CD8-positive, alpha-beta T cell (primary cell): ENCODE measurements at regions of chr11 and their contacts with region 1.

Region 1: DNA sequence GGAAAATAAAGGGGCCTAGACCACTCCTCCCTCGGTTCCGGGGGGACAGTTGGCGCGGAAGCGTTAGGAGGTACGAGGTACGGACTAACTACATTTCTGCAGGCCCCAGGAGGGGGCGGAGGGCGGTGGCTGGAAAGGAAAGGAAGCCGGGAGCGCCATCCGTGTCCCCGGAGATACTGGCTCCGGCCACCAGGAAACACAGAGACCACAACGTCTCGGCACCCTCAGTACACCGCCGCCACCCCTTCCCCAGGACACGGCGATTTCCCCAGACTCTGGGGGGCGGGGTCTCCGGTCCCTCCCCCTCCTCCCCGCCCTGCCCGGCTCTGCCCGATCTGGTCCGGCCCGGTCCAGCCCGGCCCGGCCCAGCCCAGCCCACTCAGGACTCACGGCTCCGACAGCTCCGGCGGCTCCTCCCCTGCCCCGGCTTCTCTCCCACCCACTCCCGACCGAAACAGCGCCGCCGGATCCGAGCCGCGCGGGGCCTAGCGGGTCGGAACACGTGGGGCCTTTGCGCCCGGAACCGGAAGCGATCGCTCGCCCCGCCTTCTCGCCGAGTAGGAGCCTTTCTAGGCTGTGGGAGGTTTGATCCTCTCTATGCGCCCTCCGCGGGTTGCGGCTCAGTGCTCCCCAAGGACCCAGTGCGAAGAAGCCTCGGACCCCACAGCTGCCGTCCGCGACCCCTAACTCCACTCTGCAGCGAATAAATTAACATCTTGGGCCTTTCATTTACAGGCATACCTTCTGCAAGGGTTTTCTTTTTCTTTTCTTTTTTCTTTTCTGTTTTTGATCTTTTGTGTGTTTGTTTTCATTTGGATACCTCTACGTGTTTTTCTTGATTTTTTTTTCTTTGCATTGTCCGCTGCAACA is at the start of gene ZNF202:
- DNase-seq: peak; percentile 78 to 94 (median 93)
- ATAC-seq: peak; percentile 93
- H3K4me3 ChIP-seq: peak within 1 kb of the TSS; percentile 51 to 91
- H3K4me3 Mint-ChIP-seq: peak within 1 kb of the TSS; percentile 94
- H3K27ac ChIP-seq: peak within 1 kb of the TSS; percentile 36 to 84
- H3K27ac Mint-ChIP-seq: peak within 1 kb of the TSS; percentile 92
- H3K4me1 ChIP-seq: peaks cover 26% of the 10 kb centered on the region
- H3K4me1 Mint-ChIP-seq: peaks cover 49% of the 10 kb centered on the region
- H3K27me3 ChIP-seq: no peaks in the 10 kb centered on the region
- H3K27me3 Mint-ChIP-seq: no peaks in the 10 kb centered on the region
- CTCF ChIP-seq: peak; percentile 30
- total RNA-seq, gene ZNF202: 10.7 to 11.4 TPM

Region 2: GRCh38 chr11:123429913-123430720 is 311.3 kb before region 1 on chr11 and contains the start of gene GRAMD1B:
- CTCF ChIA-PET with region 1: no interaction called
- POLR2A ChIA-PET with region 1: no interaction called
- intact Hi-C with region 1: loop called in 1 of 2 experiments (anchors 2 kb)
- DNase-seq: peak; percentile 48 to 86 (median 74)
- ATAC-seq: peak; percentile 86
- H3K4me3 ChIP-seq: peak within 1 kb of the TSS; percentile 61 to 70
- H3K4me3 Mint-ChIP-seq: peak within 1 kb of the TSS; percentile 91
- H3K27ac ChIP-seq: peak within 1 kb of the TSS; percentile 53 to 54
- H3K27ac Mint-ChIP-seq: peak within 1 kb of the TSS; percentile 92
- H3K4me1 ChIP-seq: peaks cover 14% of the 10 kb centered on the region
- H3K4me1 Mint-ChIP-seq: peaks cover 22% of the 10 kb centered on the region
- H3K27me3 ChIP-seq: no peaks in the 10 kb centered on the region
- H3K27me3 Mint-ChIP-seq: no peaks in the 10 kb centered on the region
- CTCF ChIP-seq: peak; percentile 18
- total RNA-seq, gene GRAMD1B: 18.6 to 20.7 TPM

Region 3: GRCh38 chr11:124179311-124179710 is 437.9 kb after region 1 on chr11:
- CTCF ChIA-PET with region 1: no interaction called
- POLR2A ChIA-PET with region 1: no interaction called
- intact Hi-C with region 1: no loop called
- DNase-seq: no peak
- ATAC-seq: no peak
- H3K4me3 ChIP-seq: no peak overlapping the region
- H3K4me3 Mint-ChIP-seq: no peak overlapping the region
- H3K27ac ChIP-seq: no peak overlapping the region
- H3K27ac Mint-ChIP-seq: no peak overlapping the region
- H3K4me1 ChIP-seq: no peaks in the 10 kb centered on the region
- H3K4me1 Mint-ChIP-seq: no peaks in the 10 kb centered on the region
- H3K27me3 ChIP-seq: no peaks in the 10 kb centered on the region
- H3K27me3 Mint-ChIP-seq: no peaks in the 10 kb centered on the region
- CTCF ChIP-seq: no peak

Region 4: GRCh38 chr11:124622531-124623451 is 881.4 kb after region 1 on chr11 and contains the start of gene TBRG1:
- CTCF ChIA-PET with region 1: no interaction called
- POLR2A ChIA-PET with region 1: no interaction called
- intact Hi-C with region 1: loop called (anchors 5 kb)
- DNase-seq: peak; percentile 62 to 95 (median 84)
- ATAC-seq: peak; percentile 97
- H3K4me3 ChIP-seq: peak within 1 kb of the TSS; percentile 94 to 100
- H3K4me3 Mint-ChIP-seq: peak within 1 kb of the TSS; percentile 97
- H3K27ac ChIP-seq: peak within 1 kb of the TSS; percentile 95 to 97
- H3K27ac Mint-ChIP-seq: peak within 1 kb of the TSS; percentile 99
- H3K4me1 ChIP-seq: peaks cover 16% of the 10 kb centered on the region
- H3K4me1 Mint-ChIP-seq: peaks cover 43% of the 10 kb centered on the region
- H3K27me3 ChIP-seq: no peaks in the 10 kb centered on the region
- H3K27me3 Mint-ChIP-seq: peaks cover 6% of the 10 kb centered on the region
- CTCF ChIP-seq: no peak
- total RNA-seq, gene TBRG1: 59.2 to 61.0 TPM

Region 5: GRCh38 chr11:124746621-124747243 is 1005.3 kb after region 1 on chr11:
- CTCF ChIA-PET with region 1: no interaction called
- POLR2A ChIA-PET with region 1: no interaction called
- intact Hi-C with region 1: loop called in 1 of 2 experiments (anchors 5 kb)
- DNase-seq: peak; percentile 64 to 90 (median 79)
- ATAC-seq: peak; percentile 92
- H3K4me3 ChIP-seq: peak overlapping the region; percentile 87 to 98
- H3K4me3 Mint-ChIP-seq: peak overlapping the region; percentile 95
- H3K27ac ChIP-seq: peak overlapping the region; percentile 58 to 80
- H3K27ac Mint-ChIP-seq: peak overlapping the region; percentile 91
- H3K4me1 ChIP-seq: peaks cover 11% of the 10 kb centered on the region
- H3K4me1 Mint-ChIP-seq: peaks cover 15% of the 10 kb centered on the region
- H3K27me3 ChIP-seq: no peaks in the 10 kb centered on the region
- H3K27me3 Mint-ChIP-seq: peaks cover 2% of the 10 kb centered on the region
- CTCF ChIP-seq: peak; percentile 55